Heart right ventricle (tissue), 16 donors: ENCODE measurements at regions of chr17 and their contacts with region 1.

Region 1: GRCh38 chr17:59753522-59754467 is 46.3 kb downstream of the VMP1 start:
- DNase-seq: peak in 1 of 2 donors; percentile 43
- ATAC-seq: peak in 7 of 8 donors; percentile 86 to 95 (median 91)
- H3K4me3 ChIP-seq: peak overlapping the region in 2 of 10 donors; percentile 9 to 29
- H3K27ac ChIP-seq: peak overlapping the region in 4 of 10 donors; percentile 7 to 90 (median 26)
- H3K4me1 ChIP-seq: peaks cover 0 to 56% (median 0%) of the 10 kb centered on the region in 9 donors
- H3K27me3 ChIP-seq: no peaks in the 10 kb centered on the region
- CTCF ChIP-seq: peak; percentile 41 to 84 (median 73)

Region 2: DNA sequence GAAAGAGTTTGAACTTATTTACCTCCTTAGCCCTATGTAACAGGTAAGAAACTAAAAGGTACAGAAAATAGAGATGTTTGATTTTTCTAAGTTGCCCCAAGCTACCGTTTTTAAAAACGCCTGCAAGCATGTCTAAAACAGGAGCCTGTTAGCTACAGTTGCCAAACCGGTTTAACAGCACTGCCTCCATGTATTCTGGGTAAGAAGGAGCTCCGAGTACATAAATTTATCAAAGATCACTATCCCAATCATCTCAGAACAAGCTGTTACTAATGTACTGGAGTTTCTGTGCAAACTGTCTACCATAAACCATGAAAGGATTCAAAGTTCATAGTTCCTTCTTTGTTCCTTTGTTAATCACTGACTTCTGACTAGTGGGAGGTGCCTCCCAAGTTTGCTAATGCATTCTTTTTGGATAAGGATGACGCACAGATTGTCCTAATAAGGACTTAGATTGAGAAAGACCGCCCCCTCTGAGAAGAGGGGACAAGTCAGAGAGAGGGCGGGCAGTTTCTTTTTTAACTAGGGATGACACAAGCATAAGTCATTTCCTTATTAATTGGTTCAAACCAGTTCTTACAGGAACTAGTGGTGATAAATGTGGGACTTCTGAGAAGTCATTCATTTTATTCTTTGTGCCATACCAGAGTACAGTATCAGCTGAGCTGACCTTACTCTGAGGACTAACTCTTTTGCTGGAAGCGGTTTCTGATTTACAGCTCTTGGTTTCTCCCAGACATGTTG is 83.7 kb after region 1 on chr17:
- intact Hi-C with region 1: loop called in 6 of 10 experiments (anchors 1 to 5 kb)
- DNase-seq: peak in 1 of 2 donors; percentile 89
- ATAC-seq: peak; percentile 93 to 96 (median 94)
- H3K4me3 ChIP-seq: peak overlapping the region in 9 of 10 donors; percentile 38 to 68 (median 58)
- H3K27ac ChIP-seq: peak overlapping the region; percentile 73 to 97 (median 90)
- H3K4me1 ChIP-seq: peaks cover 0 to 40% (median 32%) of the 10 kb centered on the region in 9 donors
- H3K27me3 ChIP-seq: no peaks in the 10 kb centered on the region
- CTCF ChIP-seq: peak in 1 of 9 donors; percentile 11

Region 3: GRCh38 chr17:59846394-59847165 is 92.8 kb after region 1 on chr17:
- intact Hi-C with region 1: loop called in 1 of 10 experiments (anchors 5 kb)
- DNase-seq: no peak
- ATAC-seq: peak in 7 of 8 donors; percentile 14 to 53 (median 26)
- H3K4me3 ChIP-seq: peak overlapping the region in 2 of 10 donors; percentile 14 to 15
- H3K27ac ChIP-seq: peak overlapping the region; percentile 47 to 97 (median 71)
- H3K4me1 ChIP-seq: peaks cover 0 to 87% (median 36%) of the 10 kb centered on the region in 9 donors
- H3K27me3 ChIP-seq: no peaks in the 10 kb centered on the region
- CTCF ChIP-seq: no peak

Region 4: DNA sequence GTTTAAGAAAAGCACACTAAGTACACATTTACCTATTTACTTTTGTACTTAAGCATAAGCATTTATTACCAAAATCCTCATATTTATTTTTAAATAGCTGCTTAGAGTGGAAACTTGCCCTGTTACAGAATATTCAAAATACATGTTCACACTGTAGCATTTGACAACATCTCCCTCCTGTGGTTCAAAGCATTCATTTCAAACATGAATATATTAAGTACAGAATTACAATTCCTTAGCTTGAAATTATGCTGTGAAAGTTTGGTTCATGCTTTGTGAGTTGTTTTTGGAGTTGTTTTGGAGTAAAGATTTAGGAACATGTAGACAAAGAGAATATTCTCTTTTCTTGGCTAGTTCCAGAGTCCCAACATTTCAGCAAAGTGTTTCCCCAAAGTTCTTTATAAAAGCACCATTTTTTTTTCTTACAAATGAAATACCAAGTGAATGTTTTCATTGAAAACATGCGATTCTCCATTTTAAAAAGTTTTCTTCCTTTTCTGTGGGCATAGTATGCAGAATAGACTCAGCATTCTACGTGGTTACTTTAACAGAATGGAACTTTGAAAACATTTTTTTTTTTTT is 105.7 kb after region 1 on chr17:
- intact Hi-C with region 1: loop called in 2 of 10 experiments (anchors 2 to 10 kb)
- DNase-seq: no peak
- ATAC-seq: no peak
- H3K4me3 ChIP-seq: no peak overlapping the region
- H3K27ac ChIP-seq: no peak overlapping the region
- H3K4me1 ChIP-seq: peaks cover 0 to 20% (median 0%) of the 10 kb centered on the region in 9 donors
- H3K27me3 ChIP-seq: no peaks in the 10 kb centered on the region
- CTCF ChIP-seq: peak in 8 of 9 donors; percentile 19 to 68 (median 60)

Region 5: DNA sequence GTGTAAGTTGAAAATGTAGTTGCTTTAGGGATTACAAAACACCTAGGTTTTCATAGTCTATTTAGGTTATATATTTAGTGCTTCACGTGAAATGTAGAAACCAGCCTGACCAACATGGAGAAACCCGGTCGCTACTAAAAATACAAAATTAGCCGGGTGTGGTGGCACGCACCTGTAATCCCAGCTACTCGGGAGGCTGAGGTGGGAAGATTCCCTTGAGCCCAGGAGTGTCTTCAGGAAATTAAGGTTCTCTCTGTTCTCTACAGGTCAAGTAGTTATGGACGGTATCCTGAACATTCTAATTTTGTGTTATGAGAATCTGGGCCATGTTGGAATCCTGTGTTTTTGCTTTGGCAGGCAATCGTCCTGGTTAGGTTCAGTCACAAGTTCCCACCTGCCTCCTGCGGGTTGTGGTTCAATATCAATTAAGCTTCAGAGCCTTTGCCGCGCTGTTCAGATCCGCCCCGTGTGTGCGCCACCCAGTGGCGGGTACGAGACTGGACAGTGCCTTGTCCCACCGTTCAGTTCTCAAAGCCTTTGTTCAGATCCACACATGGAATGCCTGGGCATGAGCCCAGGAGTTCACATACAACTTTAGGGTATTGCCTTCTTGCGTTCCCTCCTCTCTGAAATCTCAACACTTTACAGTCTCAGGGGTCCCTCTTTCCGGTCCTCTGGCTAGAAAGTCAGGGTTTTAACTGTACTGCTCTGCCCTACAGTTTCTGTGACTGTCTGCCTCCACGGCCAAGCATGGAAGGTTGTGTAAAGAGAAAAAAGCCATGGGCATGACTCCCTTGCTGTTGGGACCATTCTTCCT is 283.2 kb after region 1 on chr17:
- intact Hi-C with region 1: loop called in 3 of 10 experiments (anchors 5 to 10 kb)
- DNase-seq: peak; percentile 48 to 60
- ATAC-seq: peak; percentile 55 to 95 (median 84)
- H3K4me3 ChIP-seq: no peak overlapping the region
- H3K27ac ChIP-seq: no peak overlapping the region
- H3K4me1 ChIP-seq: peaks cover 0 to 8% (median 0%) of the 10 kb centered on the region in 9 donors
- H3K27me3 ChIP-seq: peaks cover 0 to 22% (median 6%) of the 10 kb centered on the region in 7 donors
- CTCF ChIP-seq: peak; percentile 74 to 94 (median 90)

Region 6: DNA sequence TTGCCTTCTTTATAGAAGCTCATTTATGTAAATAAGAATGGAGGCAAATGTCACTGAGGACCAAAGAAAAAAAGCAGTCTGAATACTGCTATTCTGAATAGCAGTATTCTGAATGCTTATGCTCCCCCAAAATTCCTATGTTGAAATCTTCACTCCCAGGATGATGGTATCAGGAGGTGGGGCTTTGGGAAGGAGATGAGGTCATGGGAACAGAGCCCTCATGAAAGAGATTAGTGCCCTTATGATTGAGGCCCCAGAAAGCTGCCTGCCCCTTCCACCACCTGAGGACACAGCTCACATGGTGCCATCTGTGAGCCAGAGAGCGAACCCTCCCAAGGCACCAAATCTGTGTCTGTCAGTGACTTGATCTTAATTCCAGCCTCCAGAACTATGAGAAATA is 296.1 kb after region 1 on chr17:
- intact Hi-C with region 1: loop called in 2 of 10 experiments (anchors 10 kb)
- DNase-seq: no peak
- ATAC-seq: no peak
- H3K4me3 ChIP-seq: no peak overlapping the region
- H3K27ac ChIP-seq: no peak overlapping the region
- H3K4me1 ChIP-seq: no peaks in the 10 kb centered on the region
- H3K27me3 ChIP-seq: no peaks in the 10 kb centered on the region
- CTCF ChIP-seq: no peak